Gastrocnemius medialis (tissue), 4 donors: ENCODE measurements at regions of chr11 and their contacts with region 1.

Region 1: GRCh38 chr11:111777094-111778046 is 11.2 kb upstream of the PPP2R1B start:
- DNase-seq: no peak
- ATAC-seq: peak; percentile 90 to 94
- H3K4me3 ChIP-seq: no peak overlapping the region
- H3K27ac ChIP-seq: peak overlapping the region in 1 of 4 donors; percentile 6
- H3K4me1 ChIP-seq: peaks cover 0 to 7% of the 10 kb centered on the region in 2 donors
- H3K27me3 ChIP-seq: no peaks in the 10 kb centered on the region
- CTCF ChIP-seq: peak; percentile 70 to 81 (median 78)
- POLR2A ChIP-seq: no peak

Region 2: GRCh38 chr11:111565114-111565720 is 212.2 kb before region 1 on chr11:
- in situ Hi-C with region 1: loop called in 1 of 4 experiments (anchors 10 kb)
- intact Hi-C with region 1: loop called (anchors 2 kb)
- DNase-seq: peak; percentile 37 to 56
- ATAC-seq: peak; percentile 54 to 86
- H3K4me3 ChIP-seq: no peak overlapping the region
- H3K27ac ChIP-seq: no peak overlapping the region
- H3K4me1 ChIP-seq: peaks cover 0 to 3% of the 10 kb centered on the region in 2 donors
- H3K27me3 ChIP-seq: no peaks in the 10 kb centered on the region
- CTCF ChIP-seq: peak; percentile 78 to 92 (median 86)
- POLR2A ChIP-seq: no peak